ENCODE measurements at regions of chrX and their contacts with region 1.

Region 1: GRCh38 chrX:151151665-151152267 is 24.6 kb upstream of the GPR50 start:
- DNase-seq: peak in 1 of 2 experiments; percentile 16
- H3K4me3 ChIP-seq: no peak overlapping the region
- H3K4me3 Mint-ChIP-seq: no peak overlapping the region
- H3K27ac Mint-ChIP-seq: no peak overlapping the region
- H3K4me1 ChIP-seq: no peaks in the 10 kb centered on the region
- H3K4me1 Mint-ChIP-seq: no peaks in the 10 kb centered on the region
- H3K27me3 ChIP-seq: no peaks in the 10 kb centered on the region
- H3K27me3 Mint-ChIP-seq: peaks cover 10% of the 10 kb centered on the region
- CTCF ChIP-seq: peak; percentile 43 to 46

Region 2: GRCh38 chrX:151359931-151360871 is 208.4 kb after region 1 on chrX:
- CTCF ChIA-PET with region 1: interaction called, 3 read pairs
- POLR2A ChIA-PET with region 1: no interaction called
- intact Hi-C with region 1: loop called (anchors 5 kb)
- DNase-seq: peak in 1 of 2 experiments; percentile 42
- H3K4me3 ChIP-seq: no peak overlapping the region
- H3K4me3 Mint-ChIP-seq: no peak overlapping the region
- H3K27ac Mint-ChIP-seq: no peak overlapping the region
- H3K4me1 ChIP-seq: no peaks in the 10 kb centered on the region
- H3K4me1 Mint-ChIP-seq: no peaks in the 10 kb centered on the region
- H3K27me3 ChIP-seq: no peaks in the 10 kb centered on the region
- H3K27me3 Mint-ChIP-seq: peaks cover 7% of the 10 kb centered on the region
- CTCF ChIP-seq: peak; percentile 31 to 63

Region 3: GRCh38 chrX:151488677-151489076 is 336.9 kb after region 1 on chrX:
- CTCF ChIA-PET with region 1: no interaction called
- POLR2A ChIA-PET with region 1: no interaction called
- intact Hi-C with region 1: loop called (anchors 2 kb)
- DNase-seq: peak in 1 of 2 experiments; percentile 2
- H3K4me3 ChIP-seq: no peak overlapping the region
- H3K4me3 Mint-ChIP-seq: no peak overlapping the region
- H3K27ac Mint-ChIP-seq: no peak overlapping the region
- H3K4me1 ChIP-seq: no peaks in the 10 kb centered on the region
- H3K4me1 Mint-ChIP-seq: no peaks in the 10 kb centered on the region
- H3K27me3 ChIP-seq: no peaks in the 10 kb centered on the region
- H3K27me3 Mint-ChIP-seq: no peaks in the 10 kb centered on the region
- CTCF ChIP-seq: peak; percentile 33 to 39

Region 4: DNA sequence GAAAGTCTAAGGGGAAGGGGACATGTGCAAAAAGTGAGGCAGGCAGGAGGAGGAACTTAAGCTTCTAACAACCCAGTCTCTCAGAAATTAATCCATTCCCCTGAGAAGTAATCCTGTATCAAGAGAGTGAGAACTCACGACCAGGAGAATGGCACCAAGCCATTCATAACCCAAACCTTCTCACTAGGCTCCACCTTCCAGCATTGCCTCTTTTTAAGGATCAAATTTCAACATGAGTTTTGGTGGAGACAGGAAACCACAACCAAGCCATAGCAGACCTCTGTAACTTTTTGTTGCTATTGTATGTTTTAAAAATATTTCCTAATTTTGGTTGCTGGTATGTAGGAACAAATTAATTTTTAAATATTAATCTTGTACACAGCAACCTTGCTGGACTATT is 444.5 kb after region 1 on chrX:
- CTCF ChIA-PET with region 1: no interaction called
- POLR2A ChIA-PET with region 1: no interaction called
- intact Hi-C with region 1: no loop called
- DNase-seq: no peak
- H3K4me3 ChIP-seq: no peak overlapping the region
- H3K4me3 Mint-ChIP-seq: no peak overlapping the region
- H3K27ac Mint-ChIP-seq: no peak overlapping the region
- H3K4me1 ChIP-seq: no peaks in the 10 kb centered on the region
- H3K4me1 Mint-ChIP-seq: no peaks in the 10 kb centered on the region
- H3K27me3 ChIP-seq: no peaks in the 10 kb centered on the region
- H3K27me3 Mint-ChIP-seq: no peaks in the 10 kb centered on the region
- CTCF ChIP-seq: no peak

Region 5: DNA sequence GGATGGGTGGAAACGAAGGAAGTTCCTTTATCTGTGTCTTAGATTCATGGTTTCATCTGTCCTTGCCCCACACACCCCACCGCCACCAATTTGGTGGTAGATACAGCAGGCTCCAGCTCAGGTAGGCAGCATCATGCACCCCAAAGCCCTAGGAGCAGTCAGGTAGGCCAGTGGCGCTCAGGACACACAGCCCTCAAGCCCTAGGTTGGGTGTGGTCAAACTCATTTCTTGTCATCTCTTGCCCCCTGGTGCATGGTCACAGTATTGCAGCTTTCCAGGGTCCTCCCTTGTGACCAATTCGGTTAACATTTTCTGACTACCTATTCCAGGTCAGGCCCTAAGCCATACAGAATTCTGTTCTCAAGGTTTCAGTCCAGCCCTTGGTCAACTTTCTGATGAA is 529.0 kb after region 1 on chrX:
- CTCF ChIA-PET with region 1: interaction called, 4 read pairs
- POLR2A ChIA-PET with region 1: no interaction called
- intact Hi-C with region 1: loop called (anchors 1 kb)
- DNase-seq: peak; percentile 49 to 63
- H3K4me3 ChIP-seq: no peak overlapping the region
- H3K4me3 Mint-ChIP-seq: no peak overlapping the region
- H3K27ac Mint-ChIP-seq: no peak overlapping the region
- H3K4me1 ChIP-seq: no peaks in the 10 kb centered on the region
- H3K4me1 Mint-ChIP-seq: no peaks in the 10 kb centered on the region
- H3K27me3 ChIP-seq: no peaks in the 10 kb centered on the region
- H3K27me3 Mint-ChIP-seq: peaks cover 11% of the 10 kb centered on the region
- CTCF ChIP-seq: peak; percentile 39 to 45

Measured in Caco-2 (cell line).